ENCODE measurements at regions of chrX and their contacts with region 1.

Region 1: DNA sequence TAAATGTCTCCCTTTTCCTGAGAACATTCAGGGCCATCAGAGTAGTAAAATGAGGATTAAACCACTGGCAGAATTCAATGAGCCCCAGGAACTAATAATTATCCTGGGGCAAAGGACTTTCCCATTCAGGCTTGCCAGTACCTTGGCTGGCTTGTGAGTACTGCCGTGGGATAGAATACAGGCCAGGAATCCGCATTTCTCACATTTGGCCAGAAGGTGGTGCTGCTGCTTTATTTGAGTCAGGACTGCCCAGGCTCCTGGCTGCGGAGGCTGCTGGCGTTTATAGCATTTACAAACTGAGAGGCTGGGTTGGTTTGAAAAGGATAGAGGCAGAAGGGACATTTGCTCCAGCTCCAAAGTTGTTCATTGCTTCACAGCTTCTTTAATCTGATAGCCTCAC is 91.4 kb downstream of the RTL9 start:
- DNase-seq: peak; percentile 68 to 90
- H3K4me3 ChIP-seq: no peak overlapping the region
- H3K4me1 ChIP-seq: no peaks in the 10 kb centered on the region; the same call in none of the 2 replicates
- H3K27me3 ChIP-seq: peaks cover 12% of the 10 kb centered on the region

Region 2: GRCh38 chrX:109934434-109934833 is 515.6 kb before region 1 on chrX:
- in situ Hi-C with region 1: no loop called
- DNase-seq: no peak
- H3K4me3 ChIP-seq: no peak overlapping the region
- H3K4me1 ChIP-seq: no peaks in the 10 kb centered on the region
- H3K27me3 ChIP-seq: peaks cover 3% of the 10 kb centered on the region; the same call in 1 of the 2 replicates

Region 3: GRCh38 chrX:110847334-110847733 is 397.3 kb after region 1 on chrX:
- in situ Hi-C with region 1: loop called (anchors 5 kb)
- DNase-seq: peak; percentile 48 to 74
- H3K4me3 ChIP-seq: no peak overlapping the region
- H3K4me1 ChIP-seq: no peaks in the 10 kb centered on the region; the same call in 1 of the 2 replicates
- H3K27me3 ChIP-seq: no peaks in the 10 kb centered on the region

Region 4: GRCh38 chrX:111098874-111099273 is 648.8 kb after region 1 on chrX:
- in situ Hi-C with region 1: loop called (anchors 10 kb)
- DNase-seq: peak; percentile 60 to 90
- H3K4me3 ChIP-seq: no peak overlapping the region
- H3K4me1 ChIP-seq: peaks cover 14% of the 10 kb centered on the region
- H3K27me3 ChIP-seq: no peaks in the 10 kb centered on the region

Region 5: GRCh38 chrX:111254896-111255693 is 805.0 kb after region 1 on chrX:
- in situ Hi-C with region 1: loop called (anchors 10 kb)
- DNase-seq: no peak
- H3K4me3 ChIP-seq: no peak overlapping the region
- H3K4me1 ChIP-seq: no peaks in the 10 kb centered on the region
- H3K27me3 ChIP-seq: 0 out of 2 replicates have a peak, but pooled peaks cover 2% of the 10 kb centered on the region